ENCODE measurements at regions of chr1 and their contacts with region 1.

Region 1: GRCh38 chr1:230509281-230509977 is 83.3 kb upstream of the PGBD5 start:
- H3K4me3 Mint-ChIP-seq: no peak overlapping the region
- H3K27ac Mint-ChIP-seq: peak overlapping the region; percentile 69
- H3K4me1 Mint-ChIP-seq: peaks cover 34% of the 10 kb centered on the region
- H3K27me3 Mint-ChIP-seq: peaks cover 2% of the 10 kb centered on the region

Region 2: DNA sequence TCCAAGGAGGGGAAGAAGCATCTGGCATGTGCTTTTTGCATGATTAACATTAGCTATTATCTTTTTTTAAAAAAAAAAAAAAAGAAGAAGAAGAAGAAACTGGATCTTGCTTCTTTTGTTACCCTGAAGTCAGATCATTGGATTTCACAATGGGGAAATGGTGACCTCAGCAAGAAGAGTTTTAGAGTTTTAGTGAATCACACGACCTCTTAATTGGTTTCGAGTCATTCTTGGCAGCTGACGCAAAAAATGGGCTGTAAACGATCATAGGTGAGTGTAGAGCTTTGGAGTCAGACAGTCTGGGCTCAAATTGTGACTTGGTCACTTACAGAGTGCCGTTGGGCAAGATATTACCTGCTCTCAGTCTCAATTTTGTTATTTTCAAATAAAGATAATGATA is 50.0 kb before region 1 on chr1:
- intact Hi-C with region 1: loop called (anchors 5 kb)
- H3K4me3 Mint-ChIP-seq: no peak overlapping the region
- H3K27ac Mint-ChIP-seq: no peak overlapping the region
- H3K4me1 Mint-ChIP-seq: peaks cover 24% of the 10 kb centered on the region
- H3K27me3 Mint-ChIP-seq: peaks cover 16% of the 10 kb centered on the region

Region 3: DNA sequence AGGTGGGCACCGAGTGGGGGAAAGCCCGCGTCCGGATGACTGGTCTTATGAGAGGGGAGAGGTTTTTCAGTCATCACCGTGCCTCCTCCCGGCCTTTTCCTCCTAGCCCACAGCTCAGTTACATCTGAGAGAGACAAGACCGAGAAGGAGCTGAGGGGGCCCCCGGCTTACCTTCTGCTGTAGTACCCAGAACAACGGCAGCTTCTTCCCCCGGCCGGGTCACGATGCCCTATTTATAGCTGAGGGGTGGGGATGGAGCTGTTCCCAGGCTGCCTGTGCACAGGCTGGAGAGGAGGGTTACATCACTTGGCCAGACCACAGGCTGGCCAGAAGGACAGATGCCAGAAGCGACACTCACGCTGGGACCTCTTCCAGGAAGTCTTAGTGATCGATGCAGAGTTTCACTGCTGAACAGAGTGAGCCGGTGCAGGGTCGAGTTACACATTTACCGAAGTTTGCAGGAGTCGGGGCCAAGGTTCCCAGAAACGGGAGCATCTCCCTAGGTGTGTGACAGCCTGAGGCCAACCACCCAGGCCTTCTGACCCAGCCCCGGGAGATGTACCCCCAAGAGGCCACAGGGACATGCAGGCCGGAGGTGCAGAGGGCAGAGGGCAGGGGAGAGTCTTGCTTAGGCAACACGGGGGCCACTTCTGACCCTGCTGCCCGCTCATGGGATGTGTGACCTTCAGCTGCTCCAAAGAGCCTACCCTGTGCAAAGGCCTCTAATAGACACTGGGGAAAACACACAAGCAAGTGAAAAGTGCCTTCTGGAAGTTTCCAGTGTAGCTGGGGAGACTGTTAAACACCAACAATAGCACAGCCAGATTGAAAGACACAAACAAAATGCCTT is 204.7 kb after region 1 on chr1 and contains the start of gene AGT:
- intact Hi-C with region 1: no loop called
- H3K4me3 Mint-ChIP-seq: no peak within 1 kb of the TSS
- H3K27ac Mint-ChIP-seq: no peak within 1 kb of the TSS
- H3K4me1 Mint-ChIP-seq: no peaks in the 10 kb centered on the region
- H3K27me3 Mint-ChIP-seq: peaks cover 3% of the 10 kb centered on the region